Activated naive CD4-positive, alpha-beta T cell treated with anti-CD3 and anti-CD28 coated beads for 36 hours (primary cell): ENCODE measurements at regions of chr4 and their contacts with region 1.

Region 1: DNA sequence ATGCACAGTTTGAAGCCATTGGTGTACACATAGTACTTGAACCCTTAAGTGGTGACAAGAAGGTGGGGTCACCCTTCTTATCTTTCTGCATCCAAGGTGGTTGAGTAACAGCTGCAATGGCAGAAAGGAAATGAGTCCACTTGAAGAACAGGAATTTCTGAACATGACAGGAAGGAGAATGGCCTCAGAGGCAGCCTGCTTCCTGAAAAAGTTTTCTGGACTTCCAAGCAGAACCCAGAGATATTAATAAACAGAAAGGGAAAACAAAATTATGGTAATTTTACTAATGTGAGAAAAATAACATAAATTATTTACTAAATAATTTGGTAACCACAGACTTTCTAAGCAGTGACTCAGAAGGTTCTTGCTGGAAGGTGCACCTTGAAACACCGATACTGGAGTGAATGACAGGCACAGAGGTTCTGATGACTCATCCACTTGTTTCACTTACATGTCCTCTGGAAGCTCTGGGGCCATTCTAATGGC is 119.9 kb upstream of the HS3ST1 start:
- DNase-seq: peak; percentile 9
- H3K4me3 Mint-ChIP-seq: no peak overlapping the region
- H3K27ac Mint-ChIP-seq: no peak overlapping the region
- H3K4me1 Mint-ChIP-seq: peaks cover 12% of the 10 kb centered on the region
- H3K27me3 Mint-ChIP-seq: peaks cover 2% of the 10 kb centered on the region

Region 2: GRCh38 chr4:11480683-11481082 is 68.0 kb before region 1 on chr4:
- CTCF ChIA-PET with region 1: no interaction called
- intact Hi-C with region 1: loop called (anchors 5 kb)
- DNase-seq: peak; percentile 36
- H3K4me3 Mint-ChIP-seq: no peak overlapping the region
- H3K27ac Mint-ChIP-seq: no peak overlapping the region
- H3K4me1 Mint-ChIP-seq: peaks cover 13% of the 10 kb centered on the region
- H3K27me3 Mint-ChIP-seq: no peaks in the 10 kb centered on the region

Region 3: DNA sequence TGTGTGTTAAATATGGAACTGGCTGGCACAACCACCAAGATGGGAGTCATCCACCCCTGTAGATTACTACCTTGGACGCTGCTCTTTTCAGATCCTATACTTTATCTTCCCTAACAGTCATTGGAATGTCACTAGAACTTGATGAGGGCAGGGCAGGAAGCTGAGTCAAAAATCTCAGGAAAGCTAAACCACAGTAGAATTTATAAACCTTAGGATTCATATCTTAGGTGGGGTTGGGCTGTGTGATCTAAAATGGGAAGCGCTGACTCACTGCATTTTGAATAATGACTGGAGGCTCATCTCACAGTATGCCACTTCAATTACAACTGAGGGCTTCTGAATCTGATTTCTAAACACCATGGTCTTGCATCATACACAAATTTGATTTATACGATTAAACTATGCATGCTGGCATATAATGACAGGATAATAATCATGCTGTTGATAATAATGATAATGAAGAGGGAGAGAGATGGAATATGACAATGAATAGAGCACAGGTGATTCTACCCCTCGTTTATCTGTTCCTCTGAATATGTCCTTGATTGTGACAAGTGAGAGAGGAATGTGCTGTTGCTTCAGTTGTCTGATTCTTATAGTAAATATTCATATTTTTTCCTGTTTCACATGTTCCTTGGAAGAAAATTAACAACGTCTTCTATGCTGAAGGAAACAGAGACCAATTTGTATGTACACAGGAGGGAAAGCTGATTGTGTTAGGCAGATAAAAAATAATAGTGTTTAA is 150.4 kb after region 1 on chr4:
- CTCF ChIA-PET with region 1: no interaction called
- intact Hi-C with region 1: no loop called
- DNase-seq: no peak
- H3K4me3 Mint-ChIP-seq: no peak overlapping the region
- H3K27ac Mint-ChIP-seq: no peak overlapping the region
- H3K4me1 Mint-ChIP-seq: no peaks in the 10 kb centered on the region
- H3K27me3 Mint-ChIP-seq: peaks cover 3% of the 10 kb centered on the region

Region 4: GRCh38 chr4:11966782-11967181 is 418.1 kb after region 1 on chr4:
- CTCF ChIA-PET with region 1: no interaction called
- intact Hi-C with region 1: no loop called
- DNase-seq: no peak
- H3K4me3 Mint-ChIP-seq: no peak overlapping the region
- H3K27ac Mint-ChIP-seq: no peak overlapping the region
- H3K4me1 Mint-ChIP-seq: no peaks in the 10 kb centered on the region
- H3K27me3 Mint-ChIP-seq: peaks cover 3% of the 10 kb centered on the region